ENCODE measurements at regions of chrX and their contacts with region 1.

Region 1: DNA sequence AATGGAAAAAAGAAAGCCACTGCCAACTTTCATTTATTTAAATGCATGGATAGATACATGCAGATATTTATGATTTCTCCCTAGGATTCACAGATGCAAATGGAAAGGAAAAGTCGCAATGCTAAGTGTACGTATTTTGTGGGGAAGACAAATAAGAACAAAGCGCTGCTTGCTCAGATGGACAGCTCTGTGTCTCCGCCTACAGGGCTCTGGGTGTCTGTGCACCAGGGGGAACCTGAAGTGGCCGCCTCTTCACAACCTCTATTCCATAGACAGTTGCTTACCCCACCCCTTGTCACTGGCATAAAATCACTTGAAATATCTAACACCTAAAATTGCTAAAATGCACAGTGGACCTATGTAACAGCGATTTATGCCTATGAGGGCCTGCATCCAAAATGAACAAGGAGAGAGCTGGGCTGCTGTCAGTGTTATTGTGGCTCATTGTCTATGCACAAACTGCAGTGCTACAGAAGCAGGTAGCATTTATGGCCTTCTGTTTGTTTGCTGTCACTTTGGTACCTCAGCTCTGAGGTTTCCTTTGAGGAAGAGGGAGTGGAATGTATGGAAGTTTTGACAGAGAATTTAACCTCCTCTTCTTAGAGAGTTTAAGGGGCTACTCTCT is 58.6 kb upstream of the PAGE1 start:
- DNase-seq: peak; percentile 35
- ATAC-seq: peak; percentile 45
- H3K4me3 ChIP-seq: no peak overlapping the region
- H3K4me3 Mint-ChIP-seq: no peak overlapping the region
- H3K27ac ChIP-seq: no peak overlapping the region
- H3K27ac Mint-ChIP-seq: no peak overlapping the region
- H3K4me1 ChIP-seq: no peaks in the 10 kb centered on the region
- H3K4me1 Mint-ChIP-seq: peaks cover 1% of the 10 kb centered on the region
- H3K27me3 ChIP-seq: no peaks in the 10 kb centered on the region
- H3K27me3 Mint-ChIP-seq: peaks cover 6% of the 10 kb centered on the region
- CTCF ChIP-seq: peak; percentile 69

Region 2: DNA sequence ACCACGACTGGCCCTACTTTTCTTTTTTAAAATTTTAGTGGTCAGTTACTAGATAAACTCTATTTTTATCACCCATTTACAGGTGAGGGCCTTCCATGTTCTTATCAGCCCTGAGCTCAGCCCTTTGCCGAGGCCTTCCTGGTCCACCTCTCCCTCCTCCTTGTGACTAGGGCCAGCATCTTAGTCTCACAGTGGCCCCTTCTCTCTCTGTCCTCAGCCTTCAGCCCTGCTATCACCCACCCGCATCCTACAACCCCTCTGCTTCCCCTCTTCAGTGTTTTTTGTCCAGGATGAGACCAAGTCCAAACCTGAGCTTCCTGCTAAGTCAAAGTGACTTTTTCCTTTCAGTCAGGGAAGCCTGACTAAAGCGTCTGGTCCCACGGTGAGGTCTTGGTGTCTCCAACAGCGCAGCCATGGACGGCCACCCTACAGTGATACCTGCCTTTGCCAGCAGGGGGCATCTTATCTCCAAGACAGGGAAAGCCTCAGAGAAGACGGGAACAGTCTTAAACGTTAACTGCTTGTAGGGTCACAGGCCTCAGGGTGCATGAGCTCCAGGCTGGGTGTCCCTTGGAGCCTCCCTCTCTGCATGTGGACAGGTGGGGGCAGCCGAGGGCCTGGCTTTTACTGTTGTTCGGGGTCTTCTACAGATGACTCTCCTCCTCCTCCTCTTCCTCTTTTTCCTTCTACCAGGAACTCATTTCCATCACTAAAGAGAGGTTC is 462.6 kb before region 1 on chrX:
- CTCF ChIA-PET with region 1: no interaction called
- POLR2A ChIA-PET with region 1: no interaction called
- intact Hi-C with region 1: loop called (anchors 2 kb)
- DNase-seq: peak; percentile 56
- ATAC-seq: peak; percentile 49
- H3K4me3 ChIP-seq: no peak overlapping the region
- H3K4me3 Mint-ChIP-seq: no peak overlapping the region
- H3K27ac ChIP-seq: no peak overlapping the region
- H3K27ac Mint-ChIP-seq: no peak overlapping the region
- H3K4me1 ChIP-seq: peaks cover 0 to 9% of the 10 kb centered on the region in 2 donors
- H3K4me1 Mint-ChIP-seq: no peaks in the 10 kb centered on the region
- H3K27me3 ChIP-seq: no peaks in the 10 kb centered on the region
- H3K27me3 Mint-ChIP-seq: no peaks in the 10 kb centered on the region
- CTCF ChIP-seq: peak; percentile 55

Region 3: DNA sequence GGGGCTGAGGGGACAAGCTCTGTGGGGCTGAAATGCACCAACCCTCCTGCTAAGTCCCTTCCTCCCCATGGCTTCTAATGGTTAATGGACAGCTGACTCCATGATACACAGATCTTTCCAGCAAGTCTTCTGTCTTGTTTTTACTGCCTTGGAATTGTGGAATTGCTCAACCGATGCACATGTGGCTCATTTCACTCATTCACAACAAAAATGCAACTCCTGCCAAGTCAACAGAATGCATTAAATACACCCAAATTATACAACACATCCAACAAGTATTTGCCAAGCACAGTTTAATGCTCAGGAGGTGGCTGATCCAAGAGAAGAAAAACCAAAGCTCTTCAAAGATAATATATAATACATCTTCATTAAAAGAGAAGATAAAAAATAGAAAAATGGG is 12.9 kb after region 1 on chrX:
- CTCF ChIA-PET with region 1: no interaction called
- POLR2A ChIA-PET with region 1: no interaction called
- intact Hi-C with region 1: no loop called
- DNase-seq: no peak
- ATAC-seq: no peak
- H3K4me3 ChIP-seq: no peak overlapping the region
- H3K4me3 Mint-ChIP-seq: no peak overlapping the region
- H3K27ac ChIP-seq: no peak overlapping the region
- H3K27ac Mint-ChIP-seq: no peak overlapping the region
- H3K4me1 ChIP-seq: no peaks in the 10 kb centered on the region
- H3K4me1 Mint-ChIP-seq: no peaks in the 10 kb centered on the region
- H3K27me3 ChIP-seq: no peaks in the 10 kb centered on the region
- H3K27me3 Mint-ChIP-seq: peaks cover 11% of the 10 kb centered on the region
- CTCF ChIP-seq: no peak